ENCODE measurements at regions of chr16 and their contacts with region 1.

Region 1: GRCh38 chr16:49474741-49475140 is 101.1 kb downstream of the C16orf78 start:
- DNase-seq: peak; percentile 18
- ATAC-seq: peak; percentile 22

Region 2: GRCh38 chr16:49452578-49452977 is 22.2 kb before region 1 on chr16:
- intact Hi-C with region 1: no loop called
- DNase-seq: no peak
- ATAC-seq: no peak

Region 3: DNA sequence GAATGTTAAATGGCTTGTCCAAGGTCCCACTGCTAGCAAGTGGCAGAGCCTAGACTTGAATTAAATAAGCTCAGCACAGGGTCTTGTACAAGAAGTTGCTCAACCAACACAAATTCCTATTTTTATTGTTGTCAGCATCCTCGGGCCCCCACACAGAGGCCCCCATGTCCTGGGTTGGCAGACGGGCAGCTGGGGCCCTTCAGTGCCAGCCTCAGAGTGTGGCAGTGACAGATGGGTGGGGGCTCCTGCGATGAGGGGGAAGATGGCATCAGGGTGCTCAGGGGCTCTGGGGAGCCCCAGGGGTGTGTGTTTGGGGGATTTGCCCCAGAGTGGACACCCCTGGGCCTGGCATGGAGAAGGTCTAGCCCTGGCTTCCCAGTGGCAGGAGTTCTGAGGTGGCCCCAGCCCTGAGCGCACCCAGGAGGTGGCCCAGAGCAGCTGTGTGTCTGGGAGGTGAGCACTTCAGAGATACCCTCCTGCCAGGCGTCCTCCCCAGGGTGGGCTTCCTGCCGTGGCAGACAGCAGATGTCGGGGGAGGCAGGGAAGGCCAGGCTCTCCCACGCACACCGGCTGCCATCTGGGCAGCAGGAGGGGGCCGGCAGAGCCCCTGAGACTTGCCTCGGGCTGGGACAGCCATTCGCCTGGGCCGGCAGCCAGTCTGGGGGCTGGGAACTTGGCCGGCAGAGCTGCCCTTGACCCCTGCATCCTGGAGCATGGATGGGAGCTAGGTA is 49.6 kb after region 1 on chr16:
- intact Hi-C with region 1: no loop called
- DNase-seq: no peak
- ATAC-seq: no peak

Region 4: DNA sequence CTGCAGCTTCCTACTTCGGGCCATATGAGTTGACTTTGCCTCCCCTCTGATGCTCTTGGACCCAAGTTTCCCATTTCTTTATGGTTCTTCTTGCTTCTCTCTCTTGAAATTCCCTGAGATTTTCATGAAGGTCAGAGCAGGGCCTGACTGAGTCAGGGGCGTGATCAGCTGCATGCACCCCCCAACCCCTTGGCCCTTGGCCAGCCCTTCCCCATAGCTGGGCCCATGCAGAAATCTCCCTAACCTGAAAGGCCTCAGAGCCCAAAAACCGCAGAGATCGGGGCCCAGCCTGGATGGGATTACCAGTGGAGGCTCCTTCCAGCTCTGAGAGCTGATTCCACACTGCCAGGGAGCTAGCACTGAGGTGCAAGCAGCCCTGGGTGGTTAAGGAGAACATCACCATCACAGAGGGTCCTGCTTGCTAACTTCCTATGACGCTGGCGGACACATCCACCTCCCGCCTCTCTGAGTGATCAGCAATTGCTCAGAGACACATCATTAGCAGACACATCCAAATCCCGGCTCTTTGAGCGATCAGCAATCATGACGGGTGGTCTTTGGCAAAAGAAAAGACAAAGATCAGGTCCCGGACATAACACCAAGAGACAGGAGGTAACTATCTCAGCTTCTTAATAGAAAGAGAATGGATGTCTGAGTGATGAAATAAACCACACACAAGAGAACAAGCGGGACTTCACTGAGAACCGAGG is 60.3 kb after region 1 on chr16:
- intact Hi-C with region 1: no loop called
- DNase-seq: no peak
- ATAC-seq: no peak

Region 5: DNA sequence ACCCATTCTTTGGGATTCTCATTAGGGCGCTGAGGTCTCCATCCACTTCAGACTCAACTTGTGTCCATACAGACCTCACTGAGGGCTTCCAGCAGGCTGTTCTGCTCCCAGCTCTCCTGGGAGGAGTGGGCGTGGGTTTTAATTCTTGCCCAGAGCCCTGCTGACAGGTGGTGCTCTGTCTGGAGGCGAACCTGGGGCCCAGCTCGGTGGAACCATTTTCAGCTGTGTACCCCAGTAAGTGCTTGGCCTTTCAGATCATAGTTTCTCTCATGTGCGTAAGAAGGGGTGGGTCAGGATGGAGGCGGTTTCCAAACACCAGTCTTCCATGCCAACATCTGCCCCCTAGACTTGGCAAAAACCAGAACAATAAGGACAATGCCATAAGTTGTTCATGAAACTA is 1052.1 kb after region 1 on chr16:
- intact Hi-C with region 1: loop called (anchors 5 kb)
- DNase-seq: peak; percentile 10
- ATAC-seq: no peak